Common myeloid progenitor, CD34-positive (primary cell): ENCODE measurements at regions of chr10 and their contacts with region 1.

Region 1: GRCh38 chr10:102678842-102679289 is 34.6 kb downstream of the TRIM8 start:
- DNase-seq: peak; percentile 32 to 42 (median 33)
- H3K4me3 ChIP-seq: peak overlapping the region in 2 of 7 experiments; percentile 26 to 38
- H3K27ac ChIP-seq: no peak overlapping the region
- H3K4me1 ChIP-seq: peaks cover 23 to 56% (median 42%) of the 10 kb centered on the region in 4 experiments
- H3K27me3 ChIP-seq: no peaks in the 10 kb centered on the region

Region 2: GRCh38 chr10:102652170-102652916 is 26.5 kb before region 1 on chr10:
- CTCF ChIA-PET with region 1: interaction called, 98 read pairs
- POLR2A ChIA-PET with region 1: no interaction called
- DNase-seq: no peak
- H3K4me3 ChIP-seq: peak overlapping the region in 1 of 7 experiments; percentile 8
- H3K27ac ChIP-seq: peak overlapping the region in 1 of 2 experiments; percentile 47
- H3K4me1 ChIP-seq: peaks cover 4 to 62% (median 56%) of the 10 kb centered on the region in 4 experiments
- H3K27me3 ChIP-seq: no peaks in the 10 kb centered on the region

Region 3: DNA sequence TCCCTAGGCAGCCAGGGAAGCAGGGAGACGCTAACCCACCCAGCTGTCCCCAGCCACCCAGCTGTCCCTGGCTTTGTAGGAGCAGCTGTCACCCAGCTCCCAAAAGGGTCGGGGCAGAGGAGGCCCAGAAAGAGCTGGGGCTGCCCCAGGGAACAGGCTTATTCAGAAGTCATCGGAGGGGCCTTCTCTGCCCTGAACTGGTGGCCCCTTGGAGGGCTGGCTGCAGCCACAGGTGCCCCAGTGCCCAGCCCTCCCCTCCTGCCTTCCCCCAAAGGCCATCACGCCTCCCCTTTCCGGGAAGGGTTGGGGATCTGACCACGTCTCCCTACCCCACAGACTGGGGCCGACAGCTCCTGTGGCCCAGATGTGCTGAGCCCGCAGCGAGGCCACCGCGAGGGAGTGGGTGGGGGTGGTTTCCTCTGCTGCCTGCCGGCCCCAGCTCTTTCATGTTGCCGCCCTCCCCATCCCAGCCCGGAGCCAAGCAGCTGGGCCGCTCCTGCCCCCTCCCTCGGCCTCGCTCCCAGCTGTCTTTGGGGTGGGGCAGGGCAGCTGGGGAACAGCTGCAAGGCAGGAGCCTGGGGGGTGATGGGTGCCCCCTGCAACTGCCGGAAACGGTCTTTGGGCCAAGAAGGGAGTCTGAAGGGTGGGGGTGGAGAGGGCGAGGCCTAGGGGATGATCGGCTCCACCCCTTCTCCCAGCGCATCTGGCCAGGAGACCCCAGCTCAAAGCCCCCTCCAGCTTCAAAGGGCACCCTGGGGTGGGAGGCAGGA is 17.8 kb before region 1 on chr10:
- CTCF ChIA-PET with region 1: interaction called, 98 read pairs
- POLR2A ChIA-PET with region 1: interaction called, 4 read pairs
- DNase-seq: peak; percentile 61 to 88 (median 85)
- H3K4me3 ChIP-seq: peak overlapping the region in 4 of 7 experiments; percentile 25 to 55 (median 39)
- H3K27ac ChIP-seq: no peak overlapping the region
- H3K4me1 ChIP-seq: peaks cover 2 to 35% (median 28%) of the 10 kb centered on the region in 4 experiments
- H3K27me3 ChIP-seq: no peaks in the 10 kb centered on the region

Region 4: GRCh38 chr10:102713814-102714620 is 35.2 kb after region 1 on chr10 and contains the start of gene ARL3:
- CTCF ChIA-PET with region 1: interaction called, 86 read pairs
- POLR2A ChIA-PET with region 1: no interaction called
- DNase-seq: peak; percentile 97 to 99 (median 99)
- H3K4me3 ChIP-seq: peak within 1 kb of the TSS; percentile 84 to 100 (median 96)
- H3K27ac ChIP-seq: peak within 1 kb of the TSS; percentile 90 to 97
- H3K4me1 ChIP-seq: peaks cover 8 to 55% (median 28%) of the 10 kb centered on the region in 4 experiments
- H3K27me3 ChIP-seq: no peaks in the 10 kb centered on the region